K562 (cell line): ENCODE measurements at regions of chr12 and their contacts with region 1.

Region 1: GRCh38 chr12:52879394-52880351 is 25.2 kb downstream of the KRT8 start:
- DNase-seq: peak; percentile 83 to 90 (median 86)
- ATAC-seq: peak; percentile 95
- H3K4me3 ChIP-seq: peak overlapping the region; percentile 30
- H3K27ac ChIP-seq: peak overlapping the region; percentile 29; the same call in 1 of the 3 replicates
- H3K4me1 ChIP-seq: peaks cover 35% of the 10 kb centered on the region in 2 experiments
- H3K27me3 ChIP-seq: no peaks in the 10 kb centered on the region
- CTCF ChIP-seq: peak; percentile 83 to 100 (median 99)
- EP300 ChIP-seq: 0 out of 2 replicates have a peak, but pooled peaks have one; percentile 7
- POLR2A ChIP-seq: peak; percentile 43; the same call in 1 of the 2 replicates
- RAD21 ChIP-seq: peak; percentile 85 to 91

Region 2: GRCh38 chr12:52156736-52157565 is 722.7 kb before region 1 on chr12:
- CTCF ChIA-PET with region 1: interaction called, 26 read pairs
- POLR2A ChIA-PET with region 1: interaction called, 4 read pairs
- in situ Hi-C with region 1: no loop called
- intact Hi-C with region 1: loop called (anchors 5 kb)
- DNase-seq: peak; percentile 76 to 86 (median 82)
- ATAC-seq: peak; percentile 88
- H3K4me3 ChIP-seq: no peak overlapping the region
- H3K27ac ChIP-seq: no peak overlapping the region
- H3K4me1 ChIP-seq: peaks cover 0 to 6% of the 10 kb centered on the region in 2 experiments; a peak in 3 of 5 replicates
- H3K27me3 ChIP-seq: peaks cover 7 to 18% of the 10 kb centered on the region in 2 experiments; a peak in 4 of 5 replicates
- CTCF ChIP-seq: peak; percentile 90 to 96 (median 92)
- EP300 ChIP-seq: no peak
- POLR2A ChIP-seq: no peak
- RAD21 ChIP-seq: peak; percentile 81 to 90

Region 3: DNA sequence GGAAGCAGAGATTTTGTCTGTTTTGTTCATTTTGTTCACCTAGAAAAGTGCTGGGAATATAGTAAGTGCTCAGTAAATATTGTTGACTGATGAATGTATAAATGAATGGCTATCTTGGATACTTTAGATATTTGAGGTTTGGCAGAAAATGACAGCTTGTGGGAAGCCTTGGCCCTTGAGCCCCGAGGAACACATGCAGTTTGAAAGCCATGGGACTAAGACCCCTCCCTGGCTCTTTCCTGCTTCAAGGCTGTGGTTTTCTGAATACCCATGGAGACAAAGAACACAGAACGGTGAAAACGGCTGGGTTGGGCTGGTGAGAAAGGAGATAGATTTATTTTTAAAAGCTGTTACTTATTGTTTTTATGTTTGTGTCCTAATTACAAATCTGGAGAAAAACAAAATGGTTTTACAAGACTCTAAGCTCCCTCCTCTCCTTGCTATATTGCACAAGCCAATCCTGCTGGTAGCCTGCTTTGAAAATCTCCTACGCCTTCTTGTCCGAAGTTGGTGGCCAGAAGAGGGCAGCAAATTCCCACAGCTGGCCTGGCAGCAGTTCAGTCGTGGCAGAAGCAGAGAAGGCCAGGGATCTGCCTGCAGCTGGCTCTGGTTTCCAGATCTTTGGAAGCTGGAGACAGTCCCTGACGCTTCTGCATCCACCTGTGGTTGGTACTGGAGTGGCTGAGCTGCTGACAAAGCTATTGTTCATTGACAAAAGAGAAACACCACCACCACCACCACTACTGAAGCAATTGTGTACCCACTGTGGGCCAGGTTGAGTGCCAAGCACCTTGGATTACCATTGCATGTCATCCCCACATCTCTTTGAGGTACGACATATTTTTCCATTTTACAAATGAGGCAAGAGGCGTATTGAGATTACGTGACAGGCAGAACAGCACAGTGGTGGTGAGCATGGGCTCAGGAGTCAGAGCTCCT is 507.2 kb before region 1 on chr12:
- CTCF ChIA-PET with region 1: interaction called, 25 read pairs
- POLR2A ChIA-PET with region 1: interaction called, 3 read pairs
- in situ Hi-C with region 1: no loop called
- intact Hi-C with region 1: loop called (anchors 5 kb)
- DNase-seq: peak; percentile 57 to 71 (median 66)
- ATAC-seq: peak; percentile 78
- H3K4me3 ChIP-seq: no peak overlapping the region
- H3K27ac ChIP-seq: no peak overlapping the region
- H3K4me1 ChIP-seq: no peaks in the 10 kb centered on the region
- H3K27me3 ChIP-seq: peaks cover 1 to 11% of the 10 kb centered on the region in 2 experiments; a peak in 4 of 5 replicates
- CTCF ChIP-seq: peak; percentile 61 to 81 (median 80)
- EP300 ChIP-seq: no peak
- POLR2A ChIP-seq: no peak
- RAD21 ChIP-seq: peak; percentile 72 to 80

Region 4: DNA sequence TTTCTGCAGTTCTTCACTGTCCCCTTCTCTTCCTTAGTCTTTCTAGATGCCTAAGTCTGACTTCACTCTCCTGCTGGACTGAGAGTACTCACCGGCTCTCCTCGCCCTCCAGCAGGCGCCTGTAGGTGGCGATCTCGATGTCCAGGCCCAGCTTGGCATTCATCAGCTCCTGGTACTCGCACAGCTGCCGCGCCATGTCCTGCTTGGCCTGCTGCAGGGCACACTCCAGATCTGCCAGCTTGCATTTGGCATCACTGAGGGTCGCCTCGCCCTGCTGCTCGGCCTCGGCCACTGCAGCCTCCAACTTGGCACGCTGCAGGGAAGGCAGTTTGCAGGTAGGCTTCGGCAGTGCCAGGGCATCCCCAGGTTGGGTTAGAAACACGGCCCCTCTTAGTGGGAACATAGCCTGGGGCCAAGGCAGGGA is 499.4 kb before region 1 on chr12:
- CTCF ChIA-PET with region 1: interaction called, 6 read pairs
- POLR2A ChIA-PET with region 1: interaction called, 3 read pairs
- in situ Hi-C with region 1: loop called (anchors 5 kb)
- intact Hi-C with region 1: no loop called
- DNase-seq: peak in 2 of 4 experiments; percentile 8 to 18
- ATAC-seq: peak; percentile 60
- H3K4me3 ChIP-seq: no peak overlapping the region
- H3K27ac ChIP-seq: no peak overlapping the region
- H3K4me1 ChIP-seq: peaks cover 0 to 5% of the 10 kb centered on the region in 2 experiments; a peak in 1 of 5 replicates
- H3K27me3 ChIP-seq: peaks cover 5 to 62% of the 10 kb centered on the region in 2 experiments; a peak in 4 of 5 replicates
- CTCF ChIP-seq: peak; percentile 44 to 48 (median 45); a peak in 5 of 6 replicates
- EP300 ChIP-seq: no peak
- POLR2A ChIP-seq: no peak
- RAD21 ChIP-seq: no peak

Region 5: GRCh38 chr12:52691076-52691840 is 188.4 kb before region 1 on chr12:
- CTCF ChIA-PET with region 1: no interaction called
- POLR2A ChIA-PET with region 1: no interaction called
- in situ Hi-C with region 1: no loop called
- intact Hi-C with region 1: loop called (anchors 10 kb)
- DNase-seq: peak in 2 of 4 experiments; percentile 19 to 22
- ATAC-seq: peak; percentile 41; the same call in 1 of the 3 replicates
- H3K4me3 ChIP-seq: no peak overlapping the region
- H3K27ac ChIP-seq: no peak overlapping the region
- H3K4me1 ChIP-seq: peaks cover 0 to 10% of the 10 kb centered on the region in 2 experiments; a peak in 1 of 5 replicates
- H3K27me3 ChIP-seq: peaks cover 11 to 42% of the 10 kb centered on the region in 2 experiments; a peak in 4 of 5 replicates
- CTCF ChIP-seq: no peak
- EP300 ChIP-seq: no peak
- POLR2A ChIP-seq: no peak
- RAD21 ChIP-seq: no peak

Region 6: DNA sequence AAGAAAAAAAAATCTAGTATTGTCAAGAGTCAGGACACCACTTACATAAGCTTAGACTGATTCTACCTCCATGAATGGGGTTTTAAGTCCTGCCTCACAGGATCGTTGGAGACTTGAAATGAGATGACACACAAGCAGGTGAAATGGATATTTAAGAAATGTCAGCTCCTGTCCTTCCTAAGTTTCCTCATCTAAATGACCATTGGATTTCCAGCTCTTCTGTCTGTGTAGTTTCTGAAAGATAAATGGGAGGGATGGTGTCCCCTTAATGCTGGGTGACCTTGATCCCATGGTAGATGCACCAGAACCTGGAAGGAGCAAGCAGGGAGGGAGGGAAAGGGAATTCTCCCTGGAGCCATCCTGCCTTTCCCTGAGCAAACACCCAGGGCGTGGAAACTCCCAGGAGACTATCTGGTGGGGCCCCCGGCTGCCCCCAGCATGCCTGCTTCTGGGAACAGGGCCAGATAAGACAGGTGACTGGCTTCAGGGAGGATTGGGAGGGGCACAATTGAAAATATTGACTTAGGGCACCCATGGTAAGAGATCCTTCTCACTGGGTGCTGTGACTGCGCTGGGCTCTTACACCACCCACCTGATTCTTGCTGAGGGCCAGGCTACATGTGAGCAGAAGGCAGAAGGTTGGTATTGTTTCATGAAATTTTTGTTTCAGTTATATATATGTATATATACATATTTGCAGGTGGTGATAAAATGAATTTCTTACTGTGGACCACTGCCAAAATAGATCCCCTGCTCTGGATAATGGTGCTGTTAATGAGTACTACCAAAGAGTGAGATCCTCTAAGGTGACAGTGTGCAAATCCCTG is 15.6 kb after region 1 on chr12:
- CTCF ChIA-PET with region 1: no interaction called
- POLR2A ChIA-PET with region 1: interaction called, 20 read pairs
- in situ Hi-C with region 1: no loop called
- intact Hi-C with region 1: no loop called
- DNase-seq: peak in 2 of 4 experiments; percentile 36 to 37
- ATAC-seq: peak; percentile 27
- H3K4me3 ChIP-seq: no peak overlapping the region
- H3K27ac ChIP-seq: no peak overlapping the region
- H3K4me1 ChIP-seq: peaks cover 8 to 16% of the 10 kb centered on the region in 2 experiments
- H3K27me3 ChIP-seq: no peaks in the 10 kb centered on the region
- CTCF ChIP-seq: no peak
- EP300 ChIP-seq: no peak
- POLR2A ChIP-seq: no peak
- RAD21 ChIP-seq: no peak